ENCODE measurements at regions of chr7 and their contacts with region 1.

Region 1: DNA sequence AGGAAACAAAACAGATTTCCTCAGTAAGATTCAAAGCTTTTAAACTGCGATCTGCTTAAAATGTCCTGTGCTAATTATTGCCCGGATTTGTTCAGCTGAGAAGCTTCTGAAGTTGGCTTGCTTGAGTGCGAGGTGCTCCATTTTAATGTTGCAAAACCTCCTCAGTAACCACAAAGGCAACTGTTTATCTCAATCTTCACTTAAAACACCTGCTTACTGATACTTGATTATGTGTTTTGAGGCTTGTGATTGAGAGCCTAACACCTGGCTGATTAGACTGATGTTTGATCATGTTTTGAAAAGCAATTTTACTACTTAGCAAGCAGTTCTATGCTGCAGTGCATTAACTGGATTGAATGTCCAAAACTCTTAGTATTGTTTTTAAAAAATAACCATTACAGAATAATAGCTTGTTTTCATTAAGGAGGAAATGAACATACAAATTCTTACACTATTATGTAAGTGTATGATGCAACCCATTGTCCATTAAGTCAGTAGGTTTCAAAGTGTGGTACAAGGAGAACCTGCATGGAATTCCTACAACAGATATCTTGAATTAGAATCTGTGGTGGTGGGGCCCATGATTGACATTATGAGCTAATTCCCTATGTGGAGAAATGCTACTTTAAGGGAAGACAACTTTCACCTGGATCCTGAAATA is 96.9 kb upstream of the FAM180A start:
- DNase-seq: no peak
- ATAC-seq: no peak
- H3K4me3 ChIP-seq: no peak overlapping the region
- H3K27ac ChIP-seq: no peak overlapping the region
- H3K4me1 ChIP-seq: no peaks in the 10 kb centered on the region
- H3K27me3 ChIP-seq: no peaks in the 10 kb centered on the region
- CTCF ChIP-seq: no peak

Region 2: GRCh38 chr7:135905858-135906257 is 60.3 kb after region 1 on chr7:
- intact Hi-C with region 1: loop called in 1 of 2 experiments (anchors 2 kb)
- DNase-seq: no peak
- ATAC-seq: no peak
- H3K4me3 ChIP-seq: no peak overlapping the region
- H3K27ac ChIP-seq: no peak overlapping the region
- H3K4me1 ChIP-seq: no peaks in the 10 kb centered on the region
- H3K27me3 ChIP-seq: no peaks in the 10 kb centered on the region
- CTCF ChIP-seq: no peak